ENCODE measurements at regions of chr3 and their contacts with region 1.

Region 1: GRCh38 chr3:59049671-59050331 is at the start of gene CFAP20DC:
- DNase-seq: peak; percentile 97
- ATAC-seq: peak; percentile 99
- H3K4me3 Mint-ChIP-seq: peak within 1 kb of the TSS; percentile 66
- H3K27ac Mint-ChIP-seq: peak within 1 kb of the TSS; percentile 65
- H3K4me1 Mint-ChIP-seq: peaks cover 9% of the 10 kb centered on the region
- H3K27me3 Mint-ChIP-seq: peaks cover 2% of the 10 kb centered on the region
- total RNA-seq, gene CFAP20DC: 2.7 to 3.5 TPM

Region 2: DNA sequence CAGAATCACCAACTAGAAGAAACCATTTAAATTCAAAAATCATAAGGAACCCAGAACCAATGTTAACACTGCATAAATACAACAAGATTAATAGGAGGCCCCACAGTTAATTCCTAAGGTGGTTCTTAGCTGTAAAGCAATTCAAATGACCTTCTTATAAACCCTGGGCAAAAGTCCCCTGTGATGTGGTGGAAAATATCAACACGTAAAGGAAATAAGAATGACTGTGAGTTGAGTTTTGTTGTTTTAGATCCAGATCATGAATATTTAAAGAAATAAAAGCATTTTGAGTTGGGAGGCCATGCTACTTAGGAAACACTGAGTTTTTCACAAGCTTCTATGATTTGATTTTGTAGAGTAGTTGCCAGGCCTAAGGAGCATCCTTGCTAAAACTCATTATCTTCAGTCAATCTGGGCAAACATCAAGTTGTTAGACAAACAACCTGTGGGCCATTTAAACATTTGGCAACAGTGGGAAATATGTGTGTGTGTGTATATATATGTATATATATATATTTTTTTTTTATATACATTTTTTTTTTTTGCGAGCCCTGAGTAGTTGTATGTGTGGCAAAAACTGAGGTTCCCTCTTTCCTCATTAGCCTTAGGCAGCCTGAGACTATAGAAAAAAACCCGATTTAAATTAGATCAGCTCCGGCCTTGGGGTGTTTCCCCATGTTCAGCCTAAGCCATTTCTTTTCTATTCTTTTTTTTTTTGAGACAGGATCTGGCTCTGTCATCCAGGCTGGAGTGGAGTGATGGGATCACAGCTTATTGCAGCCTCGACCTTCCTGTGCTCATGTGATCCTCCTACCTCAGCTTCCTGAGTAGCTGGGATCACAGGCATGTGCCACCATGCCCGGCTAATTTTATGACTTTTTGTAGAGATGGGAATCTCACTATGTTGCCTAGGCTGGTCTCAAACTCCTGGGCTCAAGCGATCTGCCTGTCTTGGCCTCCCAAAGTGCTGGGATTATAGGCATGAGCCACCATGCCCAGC is 725.1 kb before region 1 on chr3:
- CTCF ChIA-PET with region 1: no interaction called
- POLR2A ChIA-PET with region 1: no interaction called
- intact Hi-C with region 1: loop called in 1 of 2 experiments (anchors 5 kb)
- DNase-seq: no peak
- ATAC-seq: peak; percentile 62
- H3K4me3 Mint-ChIP-seq: peak overlapping the region; percentile 29
- H3K27ac Mint-ChIP-seq: peak overlapping the region; percentile 86
- H3K4me1 Mint-ChIP-seq: peaks cover 40% of the 10 kb centered on the region
- H3K27me3 Mint-ChIP-seq: no peaks in the 10 kb centered on the region

Region 3: DNA sequence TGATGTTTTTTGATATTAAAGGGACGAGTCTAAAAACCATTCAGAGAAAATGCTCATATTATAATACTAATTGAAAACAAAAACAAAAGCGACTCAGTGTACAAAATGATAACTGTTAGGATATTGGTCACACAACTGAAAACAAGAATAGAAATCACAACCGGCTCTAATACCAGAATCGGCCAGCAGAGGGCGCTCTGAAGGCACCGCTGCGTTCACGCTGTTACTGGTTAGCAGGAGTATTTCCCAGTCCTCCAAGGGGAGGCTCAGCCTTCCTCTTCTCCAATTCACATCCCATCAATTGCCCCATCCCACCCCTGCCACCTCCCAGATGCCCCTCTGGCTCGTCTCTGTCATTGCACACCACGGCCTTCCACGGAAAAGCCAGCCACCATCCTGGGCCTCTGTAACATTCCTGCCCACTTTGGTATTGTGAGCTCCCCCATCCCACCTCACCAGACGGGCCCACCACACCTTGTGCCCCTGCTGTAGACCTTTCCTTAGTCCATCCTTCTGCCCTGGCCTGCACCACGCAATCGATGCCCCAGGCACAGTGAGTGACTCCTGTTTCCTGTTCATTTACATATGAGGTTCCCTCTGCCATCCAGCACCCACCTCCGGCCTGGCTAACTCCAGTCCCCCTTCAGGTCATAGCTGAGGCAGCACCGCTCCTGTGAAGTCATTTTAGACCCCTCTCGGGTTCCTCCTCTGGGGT is 481.1 kb before region 1 on chr3:
- CTCF ChIA-PET with region 1: no interaction called
- POLR2A ChIA-PET with region 1: no interaction called
- intact Hi-C with region 1: loop called in 1 of 2 experiments (anchors 2 kb)
- DNase-seq: peak; percentile 87
- ATAC-seq: peak; percentile 70
- H3K4me3 Mint-ChIP-seq: no peak overlapping the region
- H3K27ac Mint-ChIP-seq: no peak overlapping the region
- H3K4me1 Mint-ChIP-seq: peaks cover 4% of the 10 kb centered on the region
- H3K27me3 Mint-ChIP-seq: no peaks in the 10 kb centered on the region

Region 4: GRCh38 chr3:58640700-58641372 is 409.0 kb before region 1 on chr3:
- CTCF ChIA-PET with region 1: interaction called, 3 read pairs
- POLR2A ChIA-PET with region 1: no interaction called
- intact Hi-C with region 1: loop called (anchors 1 kb)
- DNase-seq: peak; percentile 81
- ATAC-seq: peak; percentile 96
- H3K4me3 Mint-ChIP-seq: no peak overlapping the region
- H3K27ac Mint-ChIP-seq: no peak overlapping the region
- H3K4me1 Mint-ChIP-seq: no peaks in the 10 kb centered on the region
- H3K27me3 Mint-ChIP-seq: peaks cover 1% of the 10 kb centered on the region

Region 5: DNA sequence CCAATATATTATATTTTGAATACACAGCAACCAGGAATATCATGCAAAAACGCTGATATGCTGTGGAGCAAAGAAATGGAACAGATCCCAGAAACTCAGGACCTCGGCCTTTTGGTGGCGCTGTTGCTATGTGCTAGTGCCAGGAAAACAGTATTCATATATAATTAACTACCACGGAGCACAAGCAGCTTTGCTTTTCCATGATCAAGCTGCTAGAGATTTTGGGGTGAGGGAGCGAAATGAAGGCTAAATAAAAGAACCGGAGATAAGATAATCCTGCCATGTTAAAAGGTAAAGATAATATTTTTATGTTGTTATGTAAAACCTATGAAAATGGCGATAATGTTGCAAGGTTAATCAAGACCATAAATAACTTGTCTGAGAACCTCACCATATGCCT is 225.5 kb before region 1 on chr3:
- CTCF ChIA-PET with region 1: interaction called, 5 read pairs
- POLR2A ChIA-PET with region 1: no interaction called
- intact Hi-C with region 1: loop called in 1 of 2 experiments (anchors 1 kb)
- DNase-seq: peak; percentile 69
- ATAC-seq: no peak
- H3K4me3 Mint-ChIP-seq: no peak overlapping the region
- H3K27ac Mint-ChIP-seq: no peak overlapping the region
- H3K4me1 Mint-ChIP-seq: no peaks in the 10 kb centered on the region
- H3K27me3 Mint-ChIP-seq: no peaks in the 10 kb centered on the region

Region 6: GRCh38 chr3:58874795-58875194 is 175.0 kb before region 1 on chr3:
- CTCF ChIA-PET with region 1: no interaction called
- POLR2A ChIA-PET with region 1: no interaction called
- intact Hi-C with region 1: loop called (anchors 2 to 5 kb)
- DNase-seq: peak; percentile 56
- ATAC-seq: peak; percentile 96
- H3K4me3 Mint-ChIP-seq: no peak overlapping the region
- H3K27ac Mint-ChIP-seq: peak overlapping the region; percentile 12
- H3K4me1 Mint-ChIP-seq: peaks cover 19% of the 10 kb centered on the region
- H3K27me3 Mint-ChIP-seq: peaks cover 14% of the 10 kb centered on the region

Region 7: DNA sequence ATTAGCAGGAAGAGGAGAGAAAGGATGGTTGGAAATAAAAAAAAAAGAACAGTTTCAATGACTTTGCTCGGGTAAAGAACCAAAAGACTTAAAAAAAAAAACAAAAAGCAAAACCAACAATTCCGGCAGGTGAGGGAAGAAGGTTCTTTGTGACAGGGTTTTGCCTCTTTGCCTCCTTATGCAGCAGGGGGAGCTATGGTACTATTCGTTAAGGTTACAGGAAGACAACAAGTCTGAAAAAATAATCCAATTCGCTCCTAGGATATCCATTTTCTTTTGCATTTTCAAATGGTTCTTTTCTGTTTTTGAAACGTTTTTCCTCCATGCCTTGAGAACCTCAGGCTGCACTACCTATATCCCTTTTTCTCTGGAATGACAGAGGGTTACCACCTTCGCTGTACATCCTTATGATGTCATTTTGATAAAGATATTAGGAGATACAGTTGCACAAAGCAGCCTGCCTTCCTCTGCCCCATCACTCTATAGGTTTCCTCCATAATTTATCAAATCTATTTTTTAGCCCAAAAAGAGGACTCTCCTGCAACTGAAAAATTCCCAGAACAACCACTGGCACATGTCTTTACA is 55.0 kb before region 1 on chr3:
- CTCF ChIA-PET with region 1: interaction called, 5 read pairs
- POLR2A ChIA-PET with region 1: no interaction called
- intact Hi-C with region 1: loop called (anchors 1 kb)
- DNase-seq: peak; percentile 47
- ATAC-seq: no peak
- H3K4me3 Mint-ChIP-seq: no peak overlapping the region
- H3K27ac Mint-ChIP-seq: no peak overlapping the region
- H3K4me1 Mint-ChIP-seq: peaks cover 7% of the 10 kb centered on the region
- H3K27me3 Mint-ChIP-seq: peaks cover 5% of the 10 kb centered on the region

Region 8: DNA sequence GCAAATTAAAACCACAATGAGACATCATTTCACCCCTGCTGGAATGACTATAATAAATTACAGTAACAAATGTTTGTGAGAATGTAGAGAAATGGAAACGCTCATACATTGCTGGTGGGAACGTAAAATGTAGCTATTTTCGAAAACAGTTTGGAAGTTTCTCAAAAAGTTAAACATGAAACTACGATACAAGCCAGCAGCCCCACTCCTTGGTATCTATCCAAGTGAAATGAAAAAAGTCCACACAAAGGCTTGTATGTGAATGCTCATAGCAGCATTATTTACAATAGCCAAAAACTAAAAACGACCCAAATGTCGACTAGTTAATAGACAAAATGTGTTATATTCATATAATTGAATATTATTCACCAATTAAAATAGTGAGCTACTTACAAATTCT is 22.9 kb after region 1 on chr3:
- CTCF ChIA-PET with region 1: no interaction called
- POLR2A ChIA-PET with region 1: no interaction called
- intact Hi-C with region 1: no loop called
- DNase-seq: no peak
- ATAC-seq: no peak
- H3K4me3 Mint-ChIP-seq: no peak overlapping the region
- H3K27ac Mint-ChIP-seq: no peak overlapping the region
- H3K4me1 Mint-ChIP-seq: peaks cover 2% of the 10 kb centered on the region
- H3K27me3 Mint-ChIP-seq: peaks cover 34% of the 10 kb centered on the region

Region 9: GRCh38 chr3:59161048-59161447 is 111.2 kb after region 1 on chr3:
- CTCF ChIA-PET with region 1: no interaction called
- POLR2A ChIA-PET with region 1: no interaction called
- intact Hi-C with region 1: no loop called
- DNase-seq: no peak
- ATAC-seq: no peak
- H3K4me3 Mint-ChIP-seq: no peak overlapping the region
- H3K27ac Mint-ChIP-seq: no peak overlapping the region
- H3K4me1 Mint-ChIP-seq: no peaks in the 10 kb centered on the region
- H3K27me3 Mint-ChIP-seq: peaks cover 5% of the 10 kb centered on the region